ENCODE measurements at regions of chr10 and their contacts with region 1.

Region 1: GRCh38 chr10:120948889-120949608 is 97.9 kb downstream of the WDR11 start:
- DNase-seq: peak; percentile 76 to 92 (median 89)
- ATAC-seq: peak; percentile 94 to 96
- H3K4me3 ChIP-seq: peak overlapping the region; percentile 41
- H3K27ac ChIP-seq: no peak overlapping the region
- H3K4me1 ChIP-seq: no peaks in the 10 kb centered on the region
- H3K27me3 ChIP-seq: no peaks in the 10 kb centered on the region

Region 2: DNA sequence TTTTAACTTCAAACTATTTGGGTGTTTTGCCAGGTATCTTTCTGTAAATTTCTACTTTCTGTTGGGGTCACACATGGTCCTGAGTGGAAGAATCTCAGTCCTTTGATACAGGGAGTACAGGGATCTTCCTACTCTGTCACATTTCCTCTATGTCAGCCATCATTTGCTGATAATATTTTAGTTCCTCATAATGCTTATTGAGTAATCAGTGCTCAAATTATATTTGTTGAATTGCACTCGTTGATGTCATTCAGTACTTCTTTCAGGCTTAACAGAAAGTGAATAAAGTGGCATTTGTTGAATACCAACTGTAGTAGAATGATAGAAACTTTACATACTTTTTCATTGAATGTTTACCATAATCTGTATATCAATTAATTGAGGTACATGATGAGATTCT is 66.0 kb before region 1 on chr10:
- intact Hi-C with region 1: no loop called
- DNase-seq: no peak
- ATAC-seq: no peak
- H3K4me3 ChIP-seq: no peak overlapping the region
- H3K27ac ChIP-seq: no peak overlapping the region
- H3K4me1 ChIP-seq: no peaks in the 10 kb centered on the region
- H3K27me3 ChIP-seq: no peaks in the 10 kb centered on the region

Region 3: GRCh38 chr10:121598207-121598862 is 649.3 kb after region 1 on chr10 and contains the start of gene FGFR2:
- intact Hi-C with region 1: loop called in 2 of 4 experiments (anchors 5 to 10 kb)
- DNase-seq: peak; percentile 84 to 93 (median 91)
- ATAC-seq: peak; percentile 96 to 98
- H3K4me3 ChIP-seq: peak within 1 kb of the TSS; percentile 44
- H3K27ac ChIP-seq: peak within 1 kb of the TSS; percentile 78
- H3K4me1 ChIP-seq: peaks cover 3% of the 10 kb centered on the region
- H3K27me3 ChIP-seq: no peaks in the 10 kb centered on the region
- total RNA-seq, gene FGFR2: 4.0 to 20.4 (median 5.6) TPM

Region 4: DNA sequence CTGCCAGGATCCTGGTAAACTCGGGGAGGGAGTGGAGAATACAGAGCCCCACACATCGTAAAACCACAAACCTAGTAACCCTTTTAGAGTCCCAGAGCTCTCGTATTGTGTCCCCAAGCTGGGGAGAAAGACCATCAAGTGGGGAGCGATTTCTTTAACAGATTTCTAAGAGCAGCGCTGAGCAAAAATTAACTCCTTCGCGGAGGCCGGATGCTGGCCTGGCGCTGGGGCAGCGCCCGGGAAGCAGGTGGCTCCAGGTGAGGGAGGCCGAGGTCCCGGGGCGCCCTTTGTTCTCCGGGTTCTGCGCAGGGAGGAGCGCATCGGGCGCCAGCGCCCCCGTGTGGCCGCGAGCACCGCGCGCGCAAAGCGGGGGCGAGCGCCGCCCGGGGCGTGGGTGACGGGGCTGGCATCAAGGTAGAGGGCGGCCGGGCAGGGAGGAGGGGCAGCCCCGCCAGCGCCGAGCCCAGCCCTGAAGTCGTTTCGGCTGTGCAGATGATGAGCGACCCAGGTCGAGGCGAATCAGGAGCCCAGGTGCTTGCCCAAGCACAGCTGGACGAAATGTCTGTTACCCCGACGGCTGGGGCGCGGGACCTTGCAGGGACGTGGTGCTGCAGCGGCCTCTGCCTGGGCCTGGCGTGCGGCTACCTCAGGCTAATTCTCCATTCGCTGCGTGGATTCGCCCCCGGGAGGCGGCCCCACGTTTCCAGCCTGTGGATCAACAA is 659.6 kb after region 1 on chr10:
- intact Hi-C with region 1: loop called in 2 of 4 experiments (anchors 5 kb)
- DNase-seq: peak; percentile 55 to 83 (median 79)
- ATAC-seq: peak; percentile 92 to 95
- H3K4me3 ChIP-seq: peak overlapping the region; percentile 34
- H3K27ac ChIP-seq: no peak overlapping the region
- H3K4me1 ChIP-seq: no peaks in the 10 kb centered on the region
- H3K27me3 ChIP-seq: no peaks in the 10 kb centered on the region

Region 5: GRCh38 chr10:121734589-121735045 is 785.6 kb after region 1 on chr10:
- intact Hi-C with region 1: loop called (anchors 5 to 10 kb)
- DNase-seq: peak in 2 of 3 donors; percentile 16 to 52
- ATAC-seq: peak in 1 of 2 donors; percentile 56
- H3K4me3 ChIP-seq: no peak overlapping the region
- H3K27ac ChIP-seq: no peak overlapping the region
- H3K4me1 ChIP-seq: no peaks in the 10 kb centered on the region
- H3K27me3 ChIP-seq: no peaks in the 10 kb centered on the region

Region 6: GRCh38 chr10:121886997-121887622 is 938.1 kb after region 1 on chr10:
- intact Hi-C with region 1: loop called (anchors 5 to 10 kb)
- DNase-seq: peak; percentile 40 to 75 (median 52)
- ATAC-seq: peak; percentile 61 to 77
- H3K4me3 ChIP-seq: no peak overlapping the region
- H3K27ac ChIP-seq: no peak overlapping the region
- H3K4me1 ChIP-seq: no peaks in the 10 kb centered on the region
- H3K27me3 ChIP-seq: no peaks in the 10 kb centered on the region

Measured in right cardiac atrium (tissue), 5 donors.